IMR-90 (cell line): ENCODE measurements at regions of chr6 and their contacts with region 1.

Region 1: GRCh38 chr6:116287689-116288282 is 8.1 kb upstream of the TSPYL1 start:
- DNase-seq: peak; percentile 74
- ATAC-seq: peak; percentile 87
- H3K4me3 ChIP-seq: no peak overlapping the region
- H3K27ac ChIP-seq: no peak overlapping the region
- H3K4me1 ChIP-seq: no peaks in the 10 kb centered on the region; the same call in 1 of the 2 replicates
- H3K27me3 ChIP-seq: no peaks in the 10 kb centered on the region
- CTCF ChIP-seq: peak; percentile 88
- POLR2A ChIP-seq: no peak
- RAD21 ChIP-seq: peak; percentile 88

Region 2: DNA sequence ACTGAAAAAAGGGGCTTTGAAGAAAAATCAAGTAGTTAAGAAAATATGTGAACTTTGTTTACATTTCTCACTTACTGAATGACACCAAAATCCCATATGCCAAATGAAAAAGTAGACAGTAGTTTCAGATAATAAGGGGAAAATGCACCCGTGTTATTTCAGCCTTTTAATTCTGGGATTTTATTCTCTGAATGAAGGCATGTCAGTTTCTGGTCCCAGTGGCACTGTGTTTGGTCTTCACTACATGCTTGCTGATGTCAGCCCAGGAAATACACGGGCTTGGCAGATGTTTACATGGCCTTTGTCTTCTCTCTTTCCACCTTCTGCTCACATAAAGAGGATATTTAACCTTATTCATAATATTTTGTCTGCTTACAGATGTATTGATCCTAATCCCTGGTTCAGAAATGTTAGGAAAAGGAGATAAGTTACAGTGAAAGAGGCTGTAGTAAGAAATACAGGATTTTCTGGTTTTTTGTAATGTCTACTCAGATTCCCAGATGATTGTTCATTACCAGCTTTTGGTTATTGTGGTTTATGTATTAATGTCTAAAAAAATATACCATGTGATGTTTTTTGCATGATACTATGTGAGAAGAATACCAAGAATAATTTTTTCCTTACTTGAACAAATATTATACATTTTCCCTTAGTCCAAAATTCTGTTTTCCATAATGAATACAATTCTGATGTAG is 110.7 kb after region 1 on chr6:
- CTCF ChIA-PET with region 1: interaction called, 13 read pairs
- POLR2A ChIA-PET with region 1: no interaction called
- dilution Hi-C with region 1: no loop called
- in situ Hi-C with region 1: no loop called
- intact Hi-C with region 1: loop called (anchors 2 kb)
- DNase-seq: peak; percentile 72
- ATAC-seq: peak; percentile 70
- H3K4me3 ChIP-seq: no peak overlapping the region
- H3K27ac ChIP-seq: peak overlapping the region; percentile 75
- H3K4me1 ChIP-seq: peaks cover 23% of the 10 kb centered on the region
- H3K27me3 ChIP-seq: no peaks in the 10 kb centered on the region
- CTCF ChIP-seq: no peak
- POLR2A ChIP-seq: no peak
- RAD21 ChIP-seq: no peak

Region 3: DNA sequence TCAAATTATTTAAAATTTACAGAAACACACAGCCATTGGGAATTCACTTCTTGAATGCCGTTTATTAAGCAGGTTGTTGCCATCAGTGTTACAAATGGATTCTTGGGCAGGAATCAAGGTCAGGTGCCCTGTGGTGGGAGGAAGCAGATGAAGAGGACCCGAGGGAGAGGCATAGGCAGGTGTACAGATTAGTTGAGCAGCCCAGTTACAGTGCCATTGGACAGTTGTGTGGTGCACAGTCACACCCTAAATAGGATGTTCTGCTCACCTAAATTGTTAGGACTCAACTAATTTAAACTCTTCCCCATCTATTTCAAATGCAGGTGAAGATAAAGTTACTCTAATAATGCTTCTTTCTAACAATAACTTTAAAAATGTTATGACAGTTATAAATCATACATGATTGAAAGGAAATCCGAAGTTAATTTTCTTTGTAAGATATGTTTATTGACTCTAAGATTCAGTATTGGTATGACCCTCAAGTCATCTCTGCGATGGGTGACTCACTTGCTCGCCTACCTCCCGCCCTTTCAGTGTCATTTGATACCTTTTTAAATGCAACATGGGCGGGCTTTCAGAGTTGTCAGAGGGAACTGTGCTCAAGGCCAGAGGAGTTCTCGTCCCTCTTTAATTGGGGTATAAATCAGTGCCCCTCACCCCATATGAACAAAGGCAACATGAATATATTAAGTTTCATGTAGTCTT is 118.0 kb after region 1 on chr6:
- CTCF ChIA-PET with region 1: interaction called, 13 read pairs
- POLR2A ChIA-PET with region 1: interaction called, 5 read pairs
- dilution Hi-C with region 1: no loop called
- in situ Hi-C with region 1: no loop called
- intact Hi-C with region 1: no loop called
- DNase-seq: peak; percentile 86
- ATAC-seq: peak; percentile 58; the same call in 1 of the 2 replicates
- H3K4me3 ChIP-seq: no peak overlapping the region
- H3K27ac ChIP-seq: peak overlapping the region; percentile 43; the same call in 1 of the 2 replicates
- H3K4me1 ChIP-seq: peaks cover 13% of the 10 kb centered on the region
- H3K27me3 ChIP-seq: no peaks in the 10 kb centered on the region
- CTCF ChIP-seq: no peak
- POLR2A ChIP-seq: no peak
- RAD21 ChIP-seq: no peak

Region 4: GRCh38 chr6:116561377-116562018 is 273.7 kb after region 1 on chr6:
- CTCF ChIA-PET with region 1: interaction called, 9 read pairs
- POLR2A ChIA-PET with region 1: no interaction called
- dilution Hi-C with region 1: no loop called
- in situ Hi-C with region 1: no loop called
- intact Hi-C with region 1: loop called (anchors 2 kb)
- DNase-seq: peak; percentile 75
- ATAC-seq: peak; percentile 72
- H3K4me3 ChIP-seq: no peak overlapping the region
- H3K27ac ChIP-seq: no peak overlapping the region
- H3K4me1 ChIP-seq: peaks cover 10% of the 10 kb centered on the region
- H3K27me3 ChIP-seq: no peaks in the 10 kb centered on the region
- CTCF ChIP-seq: peak; percentile 89
- POLR2A ChIP-seq: no peak
- RAD21 ChIP-seq: peak; percentile 88